B cell (primary cell): ENCODE measurements at regions of chr14 and their contacts with region 1.

Region 1: DNA sequence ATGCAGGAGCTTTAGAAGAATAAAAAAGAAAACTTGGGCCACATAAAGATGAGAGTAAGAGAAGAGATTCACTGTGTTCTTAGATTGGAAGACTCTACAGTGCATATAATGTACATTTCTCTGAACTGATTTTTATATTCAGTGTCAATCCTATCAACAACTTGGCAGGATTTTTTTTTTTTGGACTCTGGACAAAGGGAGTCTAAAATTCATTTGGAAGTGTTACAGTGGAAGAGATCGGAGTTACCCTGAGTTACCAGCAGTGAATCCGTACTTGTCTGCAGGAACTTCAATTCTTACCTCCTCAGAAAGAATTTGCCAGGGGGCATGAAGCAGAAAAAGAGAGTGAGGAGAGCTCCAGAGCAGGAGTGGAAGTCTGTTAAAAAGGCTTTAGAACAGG is 24.0 kb downstream of the SERPINA11 start:
- DNase-seq: no peak
- ATAC-seq: no peak
- H3K4me3 ChIP-seq: no peak overlapping the region
- H3K4me3 Mint-ChIP-seq: no peak overlapping the region
- H3K27ac ChIP-seq: no peak overlapping the region
- H3K27ac Mint-ChIP-seq: no peak overlapping the region
- H3K4me1 ChIP-seq: no peaks in the 10 kb centered on the region
- H3K4me1 Mint-ChIP-seq: no peaks in the 10 kb centered on the region
- H3K27me3 ChIP-seq: peaks cover 0 to 2% (median 0%) of the 10 kb centered on the region in 4 experiments
- H3K27me3 Mint-ChIP-seq: peaks cover 11% of the 10 kb centered on the region
- CTCF ChIP-seq: no peak

Region 2: GRCh38 chr14:94548999-94549985 is 120.7 kb after region 1 on chr14:
- CTCF ChIA-PET with region 1: interaction called, 25 read pairs
- POLR2A ChIA-PET with region 1: no interaction called
- intact Hi-C with region 1: no loop called
- DNase-seq: peak; percentile 45
- ATAC-seq: peak; percentile 31
- H3K4me3 ChIP-seq: no peak overlapping the region
- H3K4me3 Mint-ChIP-seq: no peak overlapping the region
- H3K27ac ChIP-seq: no peak overlapping the region
- H3K27ac Mint-ChIP-seq: no peak overlapping the region
- H3K4me1 ChIP-seq: no peaks in the 10 kb centered on the region
- H3K4me1 Mint-ChIP-seq: no peaks in the 10 kb centered on the region
- H3K27me3 ChIP-seq: peaks cover 0 to 13% (median 0%) of the 10 kb centered on the region in 4 experiments
- H3K27me3 Mint-ChIP-seq: peaks cover 31% of the 10 kb centered on the region
- CTCF ChIP-seq: peak; percentile 76